ENCODE measurements at regions of chrX and their contacts with region 1.

Region 1: DNA sequence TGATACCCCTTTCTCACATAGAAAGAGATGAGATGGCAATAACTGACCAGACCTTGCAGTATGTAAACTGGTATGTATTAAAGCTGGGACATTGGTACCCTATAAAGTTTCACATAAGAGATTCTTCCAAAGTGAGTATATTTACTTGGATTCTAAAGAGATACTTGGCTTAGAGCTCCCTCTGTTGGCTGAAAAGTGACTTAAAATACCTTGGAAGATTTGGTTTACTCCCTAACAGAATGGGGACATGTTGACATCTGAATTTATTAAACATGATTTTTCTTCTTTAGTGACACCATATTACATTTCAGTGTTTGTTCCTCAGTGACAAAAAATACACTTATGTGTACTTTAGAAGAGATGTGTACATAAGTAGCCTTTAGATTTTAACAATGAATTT is 47.9 kb upstream of the RGN start:
- DNase-seq: peak; percentile 66 to 67
- H3K4me3 ChIP-seq: no peak overlapping the region
- H3K4me1 ChIP-seq: peaks cover 7% of the 10 kb centered on the region; the same call in 1 of the 2 replicates
- H3K27me3 ChIP-seq: no peaks in the 10 kb centered on the region

Region 2: GRCh38 chrX:46704767-46705386 is 325.5 kb before region 1 on chrX:
- in situ Hi-C with region 1: no loop called
- DNase-seq: no peak
- H3K4me3 ChIP-seq: no peak overlapping the region
- H3K4me1 ChIP-seq: 0 out of 2 replicates have a peak, but pooled peaks cover 2% of the 10 kb centered on the region
- H3K27me3 ChIP-seq: no peaks in the 10 kb centered on the region

Region 3: GRCh38 chrX:46912098-46912602 is 118.2 kb before region 1 on chrX and contains the start of gene JADE3:
- in situ Hi-C with region 1: loop called (anchors 10 kb)
- DNase-seq: peak; percentile 90 to 93
- H3K4me3 ChIP-seq: peak within 1 kb of the TSS; percentile 70
- H3K4me1 ChIP-seq: peaks cover 7% of the 10 kb centered on the region
- H3K27me3 ChIP-seq: peaks cover 17% of the 10 kb centered on the region

Region 4: DNA sequence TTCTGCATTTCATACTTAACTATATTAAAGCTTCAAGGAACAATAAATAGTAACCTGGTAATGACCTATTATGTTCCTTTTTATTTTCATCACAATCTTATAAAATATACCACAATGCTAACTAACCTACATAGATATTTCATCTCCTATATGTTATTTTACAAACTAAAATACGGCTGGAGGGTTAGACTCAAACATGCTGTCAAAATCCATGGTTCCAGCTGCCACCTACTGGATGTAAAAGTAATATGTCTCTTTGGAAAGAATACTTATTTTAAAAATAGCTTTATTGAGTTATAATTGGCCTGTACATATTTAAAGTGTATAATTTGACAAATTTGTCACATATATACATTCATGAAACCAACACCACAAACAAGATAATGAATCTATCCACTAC is 62.9 kb after region 1 on chrX:
- in situ Hi-C with region 1: loop called (anchors 10 kb)
- DNase-seq: peak; percentile 40 to 48
- H3K4me3 ChIP-seq: no peak overlapping the region
- H3K4me1 ChIP-seq: peaks cover 9% of the 10 kb centered on the region
- H3K27me3 ChIP-seq: peaks cover 16% of the 10 kb centered on the region

Region 5: DNA sequence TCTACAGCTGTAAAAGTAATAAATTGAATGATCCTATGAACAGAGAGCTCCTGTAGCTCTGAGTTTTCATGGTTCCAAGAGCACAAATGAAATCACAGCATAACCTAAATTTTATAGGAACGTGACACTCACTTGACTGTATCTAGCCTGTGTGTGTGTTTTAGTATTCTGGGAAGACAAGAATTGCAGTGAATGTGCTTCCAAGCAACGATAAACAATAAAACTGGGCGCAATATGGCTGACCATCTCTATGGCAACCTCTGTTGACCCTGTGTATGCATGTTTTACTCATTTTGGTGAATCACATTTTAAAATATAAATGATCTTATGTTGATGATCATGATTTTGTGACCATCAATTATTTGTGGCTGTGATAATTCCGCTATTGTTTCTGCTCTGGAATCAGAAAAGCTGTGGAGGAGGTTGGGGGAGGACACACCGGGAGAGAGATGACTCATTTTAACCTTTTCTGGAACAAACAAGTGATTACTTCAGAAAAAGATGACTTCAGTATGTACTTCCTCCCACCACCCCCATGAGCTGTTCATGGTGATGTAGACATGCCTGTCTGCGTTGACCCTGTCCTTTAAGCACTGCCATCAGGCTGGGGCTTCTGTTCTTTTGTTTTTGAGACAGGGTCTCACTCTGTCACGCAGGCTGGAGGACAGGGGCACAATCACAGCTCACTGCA is 234.3 kb after region 1 on chrX:
- in situ Hi-C with region 1: no loop called
- DNase-seq: no peak
- H3K4me3 ChIP-seq: no peak overlapping the region
- H3K4me1 ChIP-seq: no peaks in the 10 kb centered on the region
- H3K27me3 ChIP-seq: no peaks in the 10 kb centered on the region